ENCODE measurements at regions of chr2 and their contacts with region 1.

Region 1: GRCh38 chr2:135585586-135585985 is 54.3 kb downstream of the R3HDM1 start:
- DNase-seq: no peak
- H3K4me3 Mint-ChIP-seq: no peak overlapping the region
- H3K27ac Mint-ChIP-seq: no peak overlapping the region
- H3K4me1 Mint-ChIP-seq: no peaks in the 10 kb centered on the region
- H3K27me3 Mint-ChIP-seq: no peaks in the 10 kb centered on the region
- CTCF ChIP-seq: peak; percentile 15

Region 2: GRCh38 chr2:134232868-134233727 is 1352.5 kb before region 1 on chr2:
- CTCF ChIA-PET with region 1: no interaction called
- POLR2A ChIA-PET with region 1: no interaction called
- intact Hi-C with region 1: no loop called
- DNase-seq: no peak
- H3K4me3 Mint-ChIP-seq: no peak overlapping the region
- H3K27ac Mint-ChIP-seq: no peak overlapping the region
- H3K4me1 Mint-ChIP-seq: peaks cover 6% of the 10 kb centered on the region
- H3K27me3 Mint-ChIP-seq: no peaks in the 10 kb centered on the region
- CTCF ChIP-seq: no peak

Region 3: DNA sequence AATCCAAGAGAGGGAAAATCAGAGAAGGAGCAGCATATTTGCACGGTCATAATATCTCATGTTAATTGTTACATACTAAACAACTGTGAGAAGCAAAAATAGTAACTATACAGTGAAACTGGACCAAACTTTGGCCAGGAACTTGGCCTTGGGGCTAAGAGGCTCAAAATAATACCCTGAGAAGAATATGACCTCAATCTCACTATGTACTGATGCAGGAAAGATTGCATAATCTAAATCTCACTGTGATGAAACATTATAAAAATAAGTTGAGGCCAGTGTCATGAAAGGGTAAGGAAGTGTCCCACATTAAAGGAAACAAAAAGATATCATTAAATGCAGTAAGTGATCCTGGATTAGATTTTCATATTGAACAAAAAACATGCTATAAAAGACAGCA is 91.1 kb before region 1 on chr2:
- CTCF ChIA-PET with region 1: no interaction called
- POLR2A ChIA-PET with region 1: no interaction called
- intact Hi-C with region 1: loop called (anchors 10 kb)
- DNase-seq: peak; percentile 67
- H3K4me3 Mint-ChIP-seq: no peak overlapping the region
- H3K27ac Mint-ChIP-seq: no peak overlapping the region
- H3K4me1 Mint-ChIP-seq: peaks cover 14% of the 10 kb centered on the region
- H3K27me3 Mint-ChIP-seq: no peaks in the 10 kb centered on the region
- CTCF ChIP-seq: no peak

Measured in MCF 10A (cell line).